Activated B cell treated with CpG ODN at 0.5 μM for 24 hours (primary cell): ENCODE measurements at regions of chr3 and their contacts with region 1.

Region 1: GRCh38 chr3:126475413-126476114 is at the start of gene ZXDC:
- DNase-seq: peak; percentile 92
- ATAC-seq: peak; percentile 86
- H3K4me3 Mint-ChIP-seq: peak within 1 kb of the TSS; percentile 87
- H3K27ac Mint-ChIP-seq: peak within 1 kb of the TSS; percentile 63
- H3K4me1 Mint-ChIP-seq: peaks cover 37% of the 10 kb centered on the region
- H3K27me3 Mint-ChIP-seq: no peaks in the 10 kb centered on the region
- CTCF ChIP-seq: no peak
- total RNA-seq, gene ZXDC: 37.4 and 45.4 TPM in 2 replicates

Region 2: DNA sequence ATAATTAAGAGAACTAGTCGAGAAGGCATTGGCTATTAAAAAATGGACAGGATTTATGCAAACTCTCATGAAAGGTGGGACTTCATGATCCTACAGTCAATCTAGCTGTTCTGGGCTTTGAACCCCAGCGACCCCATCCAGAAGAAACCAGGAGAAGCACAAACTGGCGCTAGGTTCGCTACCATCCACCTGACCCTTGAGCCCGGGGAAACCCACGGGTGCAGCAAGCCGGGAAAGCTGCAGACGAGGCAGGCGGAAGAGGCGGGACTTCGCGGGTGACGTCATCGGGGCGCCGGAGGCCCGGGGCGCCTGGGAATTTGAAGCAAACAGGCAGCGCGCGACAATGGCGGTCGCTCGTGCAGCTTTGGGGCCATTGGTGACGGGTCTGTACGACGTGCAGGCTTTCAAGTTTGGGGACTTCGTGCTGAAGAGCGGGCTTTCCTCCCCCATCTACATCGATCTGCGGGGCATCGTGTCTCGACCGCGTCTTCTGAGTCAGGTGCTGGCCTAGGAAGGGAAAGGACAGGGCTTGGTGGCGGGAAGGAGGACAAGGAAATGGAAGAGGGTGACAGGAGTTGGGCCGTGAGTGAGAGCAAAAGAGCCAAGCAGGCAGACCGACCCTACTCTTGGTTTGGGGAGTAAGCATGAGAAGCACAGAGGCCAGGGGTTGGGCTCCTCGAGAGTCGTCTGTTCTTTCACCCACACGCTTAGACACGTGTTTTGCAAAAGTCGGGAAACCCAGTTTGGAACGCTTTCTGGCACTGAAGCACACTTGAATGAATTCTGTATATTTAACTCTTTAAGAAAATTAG is 1745.2 kb before region 1 on chr3 and contains the start of gene UMPS:
- CTCF ChIA-PET with region 1: no interaction called
- POLR2A ChIA-PET with region 1: no interaction called
- intact Hi-C with region 1: loop called (anchors 10 kb)
- DNase-seq: peak; percentile 88
- ATAC-seq: peak; percentile 98
- H3K4me3 Mint-ChIP-seq: peak within 1 kb of the TSS; percentile 100
- H3K27ac Mint-ChIP-seq: peak within 1 kb of the TSS; percentile 96
- H3K4me1 Mint-ChIP-seq: peaks cover 29% of the 10 kb centered on the region
- H3K27me3 Mint-ChIP-seq: peaks cover 12% of the 10 kb centered on the region
- CTCF ChIP-seq: no peak
- total RNA-seq, gene UMPS: 27.1 and 31.6 TPM in 2 replicates

Region 3: DNA sequence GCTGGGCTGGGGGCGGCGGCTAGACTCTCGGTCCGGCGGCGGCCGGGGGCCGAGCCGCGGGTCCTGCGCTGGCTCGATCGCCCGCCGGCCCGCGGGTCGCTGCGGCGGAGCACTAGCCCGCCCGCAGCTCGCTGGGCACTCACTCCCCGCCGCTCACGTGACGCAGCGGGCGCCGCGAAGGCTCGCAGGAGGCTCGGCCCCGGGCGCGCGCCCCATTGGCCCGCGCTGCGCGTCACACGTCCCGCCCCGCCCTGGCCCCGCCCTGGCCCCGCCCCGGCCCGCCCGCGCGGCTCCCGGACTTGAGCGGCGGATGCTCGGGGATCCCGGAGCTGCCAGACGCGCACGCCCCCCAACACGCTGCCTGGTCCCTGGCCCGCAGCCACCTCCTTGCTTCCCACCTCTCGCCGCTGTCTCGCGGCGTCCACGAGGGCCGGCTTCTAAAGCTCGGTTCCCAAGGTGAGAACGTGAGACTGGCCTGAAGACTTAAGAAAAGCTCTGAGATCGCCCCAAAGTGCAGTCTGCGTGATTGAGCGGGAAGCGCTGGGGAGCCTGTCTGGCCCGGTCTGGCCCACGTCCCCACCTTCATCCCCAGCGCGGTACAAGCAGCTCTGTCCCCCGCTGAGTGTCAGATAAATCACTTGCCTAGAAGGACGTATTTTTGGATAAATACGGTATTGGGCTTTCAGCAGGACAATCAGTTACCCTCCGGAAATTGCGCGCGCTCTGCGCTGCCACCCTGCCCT is 118.1 kb before region 1 on chr3 and contains the start of gene KLF15:
- CTCF ChIA-PET with region 1: no interaction called
- POLR2A ChIA-PET with region 1: no interaction called
- intact Hi-C with region 1: loop called (anchors 1 kb)
- DNase-seq: peak; percentile 76
- ATAC-seq: peak; percentile 93
- H3K4me3 Mint-ChIP-seq: peak within 1 kb of the TSS; percentile 88
- H3K27ac Mint-ChIP-seq: no peak within 1 kb of the TSS
- H3K4me1 Mint-ChIP-seq: peaks cover 16% of the 10 kb centered on the region
- H3K27me3 Mint-ChIP-seq: peaks cover 35% of the 10 kb centered on the region
- CTCF ChIP-seq: no peak
- total RNA-seq, gene KLF15: 0.31 and 0.39 TPM in 2 replicates

Region 4: DNA sequence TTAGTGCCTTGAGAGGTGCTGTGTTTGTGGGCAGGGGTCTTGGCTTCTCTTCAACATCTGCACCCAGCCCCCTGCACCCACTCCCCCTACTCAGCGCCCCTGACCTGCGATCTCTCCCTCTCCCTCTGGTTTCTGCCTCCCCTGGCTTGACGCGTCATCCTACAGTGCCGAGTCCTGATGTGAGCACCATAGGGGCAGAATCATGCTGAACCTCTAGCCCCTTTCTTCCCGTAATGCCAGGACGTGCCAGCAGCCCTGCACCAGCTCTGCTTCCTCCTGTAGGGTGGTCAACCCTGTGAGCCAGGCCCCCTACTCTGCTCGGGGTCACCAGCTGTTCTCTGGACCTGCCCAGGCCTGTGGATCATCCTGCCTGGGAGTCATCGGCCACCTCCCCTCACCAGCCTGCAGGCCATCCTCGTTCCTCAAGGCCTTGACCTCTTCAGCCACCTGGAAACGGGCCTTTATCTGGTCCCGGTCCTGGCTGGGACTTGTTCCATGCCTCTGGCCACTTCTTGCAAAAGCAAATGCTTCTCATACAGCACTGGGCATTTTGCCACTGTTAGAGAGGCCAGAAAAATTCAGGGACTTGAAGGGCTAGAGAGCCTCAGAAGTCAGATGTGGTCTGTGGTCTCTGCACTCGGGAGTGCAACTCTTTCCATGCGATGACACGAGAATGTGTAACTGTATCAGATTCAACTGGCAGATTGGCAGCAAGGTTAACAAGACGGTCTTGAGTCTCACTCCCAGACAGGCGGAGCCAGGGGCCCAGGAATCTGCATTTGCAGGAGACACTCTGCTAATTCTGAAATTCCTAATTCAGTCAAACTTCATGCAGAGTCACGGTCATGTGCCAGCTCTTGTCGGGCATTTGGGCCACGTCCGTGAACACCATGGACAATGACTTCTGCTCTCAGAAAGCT is 101.6 kb before region 1 on chr3:
- CTCF ChIA-PET with region 1: no interaction called
- POLR2A ChIA-PET with region 1: no interaction called
- intact Hi-C with region 1: no loop called
- DNase-seq: no peak
- ATAC-seq: no peak
- H3K4me3 Mint-ChIP-seq: no peak overlapping the region
- H3K27ac Mint-ChIP-seq: no peak overlapping the region
- H3K4me1 Mint-ChIP-seq: no peaks in the 10 kb centered on the region
- H3K27me3 Mint-ChIP-seq: no peaks in the 10 kb centered on the region
- CTCF ChIP-seq: no peak

Region 5: DNA sequence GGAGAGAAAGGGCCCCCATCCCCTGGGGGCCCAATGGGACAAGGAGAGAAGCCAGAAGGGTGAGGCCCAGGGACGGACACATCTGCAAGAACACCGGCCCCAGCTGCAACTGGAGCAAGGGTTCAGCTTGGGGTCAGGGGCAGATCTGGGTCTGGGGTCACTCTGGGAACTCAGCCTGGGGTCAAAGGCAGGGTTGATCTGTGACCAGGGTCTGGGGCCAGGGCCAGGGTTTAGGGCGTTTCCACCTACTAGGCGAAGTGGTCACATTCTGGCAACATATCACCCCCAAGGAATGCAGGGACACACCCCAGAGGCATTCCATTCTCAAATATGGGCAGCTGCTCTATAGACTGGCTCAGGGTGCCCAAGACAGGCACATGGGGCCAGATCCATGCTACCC is 33.0 kb after region 1 on chr3:
- CTCF ChIA-PET with region 1: no interaction called
- POLR2A ChIA-PET with region 1: no interaction called
- intact Hi-C with region 1: no loop called
- DNase-seq: no peak
- ATAC-seq: no peak
- H3K4me3 Mint-ChIP-seq: no peak overlapping the region
- H3K27ac Mint-ChIP-seq: no peak overlapping the region
- H3K4me1 Mint-ChIP-seq: no peaks in the 10 kb centered on the region
- H3K27me3 Mint-ChIP-seq: peaks cover 3% of the 10 kb centered on the region
- CTCF ChIP-seq: no peak

Region 6: GRCh38 chr3:127590593-127591477 is 1115.3 kb after region 1 on chr3 and contains the start of gene TPRA1:
- CTCF ChIA-PET with region 1: no interaction called
- POLR2A ChIA-PET with region 1: no interaction called
- intact Hi-C with region 1: loop called (anchors 5 kb)
- DNase-seq: peak; percentile 79
- ATAC-seq: peak; percentile 82
- H3K4me3 Mint-ChIP-seq: peak within 1 kb of the TSS; percentile 90
- H3K27ac Mint-ChIP-seq: peak within 1 kb of the TSS; percentile 85
- H3K4me1 Mint-ChIP-seq: peaks cover 28% of the 10 kb centered on the region
- H3K27me3 Mint-ChIP-seq: no peaks in the 10 kb centered on the region
- CTCF ChIP-seq: no peak
- total RNA-seq, gene TPRA1: 17.5 and 18.3 TPM in 2 replicates

Region 7: GRCh38 chr3:128153156-128154041 is 1677.8 kb after region 1 on chr3 and contains the start of gene EEFSEC:
- CTCF ChIA-PET with region 1: no interaction called
- POLR2A ChIA-PET with region 1: no interaction called
- intact Hi-C with region 1: loop called (anchors 5 kb)
- DNase-seq: peak; percentile 89
- ATAC-seq: peak; percentile 95
- H3K4me3 Mint-ChIP-seq: peak within 1 kb of the TSS; percentile 96
- H3K27ac Mint-ChIP-seq: peak within 1 kb of the TSS; percentile 95
- H3K4me1 Mint-ChIP-seq: peaks cover 17% of the 10 kb centered on the region
- H3K27me3 Mint-ChIP-seq: no peaks in the 10 kb centered on the region
- CTCF ChIP-seq: no peak
- total RNA-seq, gene EEFSEC: 20.0 and 21.3 TPM in 2 replicates